PC-3 (cell line): ENCODE measurements at regions of chr6 and their contacts with region 1.

Region 1: DNA sequence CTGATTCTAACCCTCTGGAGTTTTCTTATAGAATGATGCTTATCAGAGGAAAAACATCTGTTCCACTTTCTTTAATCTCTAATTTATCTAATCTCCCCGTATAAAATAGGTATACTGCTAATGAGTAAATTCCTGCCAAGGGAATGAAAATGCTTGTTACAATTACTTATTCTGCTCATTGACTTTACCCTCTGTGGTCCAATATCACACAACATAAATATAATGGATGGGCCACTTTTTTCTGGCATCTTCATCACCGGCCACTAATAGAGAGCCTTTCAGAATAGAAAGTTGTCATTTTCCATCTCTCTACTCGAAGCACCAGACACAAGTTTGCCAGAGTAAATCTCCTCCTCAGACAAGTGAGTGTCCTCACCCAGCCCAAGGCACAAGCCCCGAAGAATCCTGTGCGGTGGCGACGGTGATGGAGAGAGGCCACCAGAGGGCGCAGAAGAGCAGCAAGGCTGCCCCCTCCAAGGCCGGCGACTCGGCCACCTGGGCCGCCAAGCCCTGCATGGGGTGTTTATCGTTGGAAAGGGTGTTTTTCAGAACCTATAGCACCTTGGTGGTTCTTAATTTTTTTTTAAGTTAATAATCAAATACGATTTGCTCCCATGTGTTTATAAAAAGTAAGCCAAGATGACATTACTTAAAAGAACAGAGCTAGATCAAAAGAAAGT is 212.9 kb upstream of the ARID1B start:
- DNase-seq: peak; percentile 66
- ATAC-seq: peak; percentile 93
- H3K4me3 ChIP-seq: no peak overlapping the region
- H3K27ac ChIP-seq: no peak overlapping the region
- H3K4me1 ChIP-seq: no peaks in the 10 kb centered on the region
- H3K27me3 ChIP-seq: no peaks in the 10 kb centered on the region
- CTCF ChIP-seq: peak; percentile 82

Region 2: GRCh38 chr6:156359912-156360311 is 204.4 kb before region 1 on chr6:
- CTCF ChIA-PET with region 1: no interaction called
- POLR2A ChIA-PET with region 1: no interaction called
- intact Hi-C with region 1: no loop called
- DNase-seq: no peak
- ATAC-seq: no peak
- H3K4me3 ChIP-seq: no peak overlapping the region
- H3K27ac ChIP-seq: no peak overlapping the region
- H3K4me1 ChIP-seq: no peaks in the 10 kb centered on the region
- H3K27me3 ChIP-seq: no peaks in the 10 kb centered on the region
- CTCF ChIP-seq: peak; percentile 37; the same call in 1 of the 2 replicates

Region 3: GRCh38 chr6:156497618-156498017 is 66.6 kb before region 1 on chr6:
- CTCF ChIA-PET with region 1: no interaction called
- POLR2A ChIA-PET with region 1: no interaction called
- intact Hi-C with region 1: no loop called
- DNase-seq: no peak
- ATAC-seq: no peak
- H3K4me3 ChIP-seq: no peak overlapping the region
- H3K27ac ChIP-seq: no peak overlapping the region
- H3K4me1 ChIP-seq: no peaks in the 10 kb centered on the region
- H3K27me3 ChIP-seq: no peaks in the 10 kb centered on the region; the same call in 1 of the 2 replicates
- CTCF ChIP-seq: no peak

Region 4: GRCh38 chr6:156599978-156600590 is 35.8 kb after region 1 on chr6:
- CTCF ChIA-PET with region 1: no interaction called
- POLR2A ChIA-PET with region 1: no interaction called
- intact Hi-C with region 1: no loop called
- DNase-seq: no peak
- ATAC-seq: no peak
- H3K4me3 ChIP-seq: no peak overlapping the region
- H3K27ac ChIP-seq: no peak overlapping the region
- H3K4me1 ChIP-seq: no peaks in the 10 kb centered on the region
- H3K27me3 ChIP-seq: no peaks in the 10 kb centered on the region
- CTCF ChIP-seq: no peak

Region 5: DNA sequence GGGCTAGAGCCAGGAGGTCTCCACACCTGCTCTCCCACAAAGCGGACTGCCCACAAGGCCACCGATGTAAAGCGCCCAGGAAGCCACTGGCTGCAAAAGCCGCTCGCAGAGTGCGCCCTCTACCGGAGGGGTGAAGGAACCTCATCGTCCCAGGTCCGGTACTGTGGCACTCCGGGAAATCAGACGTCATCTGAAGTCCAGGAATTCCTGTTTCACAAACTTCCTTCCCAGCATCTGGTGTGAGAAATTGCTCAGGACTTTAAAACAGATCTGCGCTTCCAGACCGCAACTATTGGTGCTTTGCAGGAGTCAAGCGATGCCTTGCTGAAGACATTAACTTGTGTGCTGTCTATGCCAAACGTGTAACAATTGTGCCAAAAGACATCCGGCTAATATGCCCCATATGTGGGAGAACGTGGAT is 97.8 kb after region 1 on chr6:
- CTCF ChIA-PET with region 1: no interaction called
- POLR2A ChIA-PET with region 1: no interaction called
- intact Hi-C with region 1: loop called (anchors 1 kb)
- DNase-seq: peak; percentile 84
- ATAC-seq: peak; percentile 80
- H3K4me3 ChIP-seq: peak overlapping the region; percentile 61
- H3K27ac ChIP-seq: no peak overlapping the region
- H3K4me1 ChIP-seq: no peaks in the 10 kb centered on the region; the same call in 1 of the 2 replicates
- H3K27me3 ChIP-seq: no peaks in the 10 kb centered on the region
- CTCF ChIP-seq: peak; percentile 87

Region 6: DNA sequence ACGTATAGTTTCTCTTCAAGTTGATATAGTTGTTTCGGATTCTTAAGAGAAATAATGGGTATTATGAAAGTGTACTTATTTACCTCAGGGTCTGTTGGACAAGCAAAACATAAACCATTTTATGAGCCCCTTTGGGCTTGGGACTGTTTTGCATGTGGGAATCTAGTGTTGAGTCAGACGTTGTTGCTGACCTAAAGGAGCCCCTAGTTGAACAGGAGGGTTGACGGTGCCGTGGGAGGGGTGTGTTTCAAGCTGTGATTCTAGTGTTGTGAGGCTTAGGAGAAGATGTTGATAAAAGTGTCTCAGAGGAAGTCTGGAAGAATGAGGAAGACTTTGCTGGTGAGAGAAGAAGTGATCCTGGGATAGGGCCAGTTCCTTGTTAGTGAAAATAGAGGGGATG is 352.9 kb after region 1 on chr6:
- CTCF ChIA-PET with region 1: no interaction called
- POLR2A ChIA-PET with region 1: no interaction called
- intact Hi-C with region 1: no loop called
- DNase-seq: no peak
- ATAC-seq: no peak
- H3K4me3 ChIP-seq: no peak overlapping the region
- H3K27ac ChIP-seq: no peak overlapping the region
- H3K4me1 ChIP-seq: no peaks in the 10 kb centered on the region
- H3K27me3 ChIP-seq: no peaks in the 10 kb centered on the region
- CTCF ChIP-seq: no peak